A673 (cell line): ENCODE measurements at regions of chrX and their contacts with region 1.

Region 1: GRCh38 chrX:63299596-63299995 is 51.5 kb downstream of the SPIN4 start:
- DNase-seq: no peak
- H3K4me3 ChIP-seq: no peak overlapping the region
- H3K27ac ChIP-seq: no peak overlapping the region
- H3K4me1 ChIP-seq: no peaks in the 10 kb centered on the region
- H3K27me3 ChIP-seq: no peaks in the 10 kb centered on the region
- CTCF ChIP-seq: no peak

Region 2: GRCh38 chrX:63327788-63328187 is 28.2 kb after region 1 on chrX:
- CTCF ChIA-PET with region 1: no interaction called
- POLR2A ChIA-PET with region 1: no interaction called
- intact Hi-C with region 1: loop called (anchors 2 kb)
- DNase-seq: no peak
- H3K4me3 ChIP-seq: no peak overlapping the region
- H3K27ac ChIP-seq: no peak overlapping the region
- H3K4me1 ChIP-seq: no peaks in the 10 kb centered on the region
- H3K27me3 ChIP-seq: no peaks in the 10 kb centered on the region
- CTCF ChIP-seq: no peak

Region 3: DNA sequence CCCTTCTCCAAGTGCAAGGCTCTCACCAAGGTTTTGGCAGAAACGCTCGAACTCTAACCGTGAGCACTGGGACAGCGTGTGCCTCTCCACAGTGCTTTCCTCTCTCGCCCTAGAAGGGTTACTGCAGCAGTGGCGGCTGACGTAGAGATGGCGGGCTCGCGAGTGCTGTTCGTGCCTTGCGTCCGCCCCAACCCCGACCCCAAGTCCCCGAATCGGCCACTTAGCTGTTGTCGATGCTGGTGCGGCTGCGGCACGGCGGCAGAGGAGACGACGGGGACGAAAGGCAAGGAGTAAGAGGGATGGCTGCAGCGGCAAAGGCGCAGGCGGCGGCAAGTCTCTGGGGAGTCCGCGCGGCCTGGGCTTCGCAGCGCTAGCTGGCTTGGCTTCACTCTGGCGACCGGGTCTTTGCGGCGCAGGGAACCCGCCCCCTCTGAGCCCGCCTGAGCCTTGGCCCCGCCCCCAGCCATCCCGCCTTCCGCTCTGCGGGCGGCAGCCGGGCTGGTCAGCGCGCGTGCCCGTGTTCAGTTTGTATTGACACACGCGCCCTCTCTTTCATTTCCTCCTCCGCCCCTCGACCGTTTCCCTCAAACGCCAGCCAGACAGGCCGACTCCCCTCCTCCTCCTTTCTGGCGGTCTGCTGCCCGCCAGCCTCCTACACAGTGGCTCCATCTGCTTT is 51.5 kb after region 1 on chrX and contains the start of gene SPIN4:
- CTCF ChIA-PET with region 1: no interaction called
- POLR2A ChIA-PET with region 1: no interaction called
- intact Hi-C with region 1: no loop called
- DNase-seq: peak; percentile 62
- H3K4me3 ChIP-seq: peak within 1 kb of the TSS; percentile 51
- H3K27ac ChIP-seq: no peak within 1 kb of the TSS
- H3K4me1 ChIP-seq: no peaks in the 10 kb centered on the region
- H3K27me3 ChIP-seq: no peaks in the 10 kb centered on the region
- CTCF ChIP-seq: no peak
- total RNA-seq, gene SPIN4: 4.0 and 4.3 TPM in 2 replicates

Region 4: DNA sequence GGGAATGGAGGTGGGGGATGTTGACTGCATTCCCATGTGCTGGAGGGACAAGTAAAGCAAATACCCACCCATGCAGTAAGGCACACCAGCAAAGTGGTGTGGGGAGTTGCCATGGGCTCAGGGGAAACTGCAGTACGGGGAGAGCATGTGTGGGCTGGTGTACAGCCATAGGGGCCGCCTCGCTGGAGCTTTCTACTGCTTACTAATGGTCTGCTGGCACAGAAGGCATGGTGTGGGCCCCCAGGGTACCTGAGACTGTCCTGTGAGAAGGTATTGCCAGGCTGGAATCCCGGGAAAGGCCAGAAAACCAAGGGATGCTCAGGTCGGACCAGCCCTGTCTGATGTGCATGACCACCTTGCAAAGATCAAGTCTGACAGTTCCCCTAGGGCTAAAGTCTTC is 286.3 kb after region 1 on chrX:
- CTCF ChIA-PET with region 1: no interaction called
- POLR2A ChIA-PET with region 1: no interaction called
- intact Hi-C with region 1: no loop called
- DNase-seq: no peak
- H3K4me3 ChIP-seq: no peak overlapping the region
- H3K27ac ChIP-seq: no peak overlapping the region
- H3K4me1 ChIP-seq: no peaks in the 10 kb centered on the region
- H3K27me3 ChIP-seq: no peaks in the 10 kb centered on the region
- CTCF ChIP-seq: no peak